ENCODE measurements at regions of chr2 and their contacts with region 1.

Region 1: GRCh38 chr2:153519257-153519875 is 40.8 kb upstream of the RPRM start:
- DNase-seq: peak; percentile 77
- ATAC-seq: no peak
- H3K4me3 ChIP-seq: no peak overlapping the region
- H3K27ac ChIP-seq: no peak overlapping the region
- H3K4me1 ChIP-seq: no peaks in the 10 kb centered on the region
- H3K27me3 ChIP-seq: no peaks in the 10 kb centered on the region
- CTCF ChIP-seq: peak; percentile 89

Region 2: DNA sequence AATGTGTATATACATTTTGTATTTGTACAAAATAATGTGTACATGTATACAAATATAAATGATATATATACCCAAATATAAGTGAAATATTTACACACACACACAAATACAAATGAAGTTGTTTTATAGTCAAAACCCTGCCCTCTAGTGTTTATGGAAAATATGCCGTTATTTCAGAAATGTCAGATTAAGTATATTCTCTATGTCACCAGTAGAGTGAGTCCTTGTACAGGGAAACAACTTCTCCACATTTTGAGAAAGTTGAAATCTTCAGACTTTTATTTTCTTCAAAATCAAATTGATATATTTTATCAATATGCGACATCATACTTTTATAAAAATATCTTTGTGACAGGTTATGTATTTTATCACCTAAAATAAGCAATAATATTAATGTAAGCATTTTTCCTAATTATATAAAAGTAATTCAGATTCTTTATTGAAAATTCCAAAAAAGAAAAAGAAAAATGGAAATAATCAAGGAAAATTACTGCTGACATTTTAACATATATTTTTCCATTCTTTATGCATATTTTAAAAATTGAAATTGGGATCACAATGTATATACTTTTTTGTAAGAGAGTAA is 778.5 kb before region 1 on chr2:
- CTCF ChIA-PET with region 1: no interaction called
- POLR2A ChIA-PET with region 1: no interaction called
- intact Hi-C with region 1: loop called (anchors 2 kb)
- DNase-seq: peak; percentile 80
- ATAC-seq: no peak
- H3K4me3 ChIP-seq: no peak overlapping the region
- H3K27ac ChIP-seq: no peak overlapping the region
- H3K4me1 ChIP-seq: no peaks in the 10 kb centered on the region
- H3K27me3 ChIP-seq: no peaks in the 10 kb centered on the region
- CTCF ChIP-seq: peak; percentile 90

Region 3: GRCh38 chr2:153567367-153567766 is 48.0 kb after region 1 on chr2:
- CTCF ChIA-PET with region 1: no interaction called
- POLR2A ChIA-PET with region 1: no interaction called
- intact Hi-C with region 1: no loop called
- DNase-seq: no peak
- ATAC-seq: no peak
- H3K4me3 ChIP-seq: no peak overlapping the region
- H3K27ac ChIP-seq: no peak overlapping the region
- H3K4me1 ChIP-seq: no peaks in the 10 kb centered on the region
- H3K27me3 ChIP-seq: no peaks in the 10 kb centered on the region
- CTCF ChIP-seq: no peak

Measured in PC-3 (cell line).